ENCODE measurements at regions of chr2 and their contacts with region 1.

Region 1: GRCh38 chr2:169109502-169110409 is 40.4 kb downstream of the DHRS9 start:
- DNase-seq: peak; percentile 21
- H3K4me3 ChIP-seq: no peak overlapping the region
- CTCF ChIP-seq: peak; percentile 77

Region 2: DNA sequence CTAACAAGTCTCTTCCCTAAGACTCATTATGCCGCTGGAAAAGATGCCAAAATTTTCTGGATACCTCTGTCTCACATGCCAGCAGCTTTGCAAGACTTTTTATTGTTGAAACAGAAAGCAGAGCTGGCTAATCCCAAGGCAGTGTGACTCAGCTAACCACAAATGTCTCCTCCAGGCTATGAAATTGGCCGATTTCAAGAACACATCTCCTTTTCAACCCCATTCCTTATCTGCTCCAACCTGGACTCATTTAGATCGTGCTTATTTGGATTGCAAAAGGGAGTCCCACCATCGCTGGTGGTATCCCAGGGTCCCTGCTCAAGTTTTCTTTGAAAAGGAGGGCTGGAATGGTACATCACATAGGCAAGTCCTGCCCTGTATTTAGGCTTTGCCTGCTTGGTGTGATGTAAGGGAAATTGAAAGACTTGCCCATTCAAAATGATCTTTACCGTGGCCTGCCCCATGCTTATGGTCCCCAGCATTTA is 14.1 kb before region 1 on chr2:
- CTCF ChIA-PET with region 1: interaction called, 26 read pairs
- POLR2A ChIA-PET with region 1: no interaction called
- DNase-seq: peak; percentile 46
- H3K4me3 ChIP-seq: no peak overlapping the region
- CTCF ChIP-seq: no peak

Measured in AG04449 (cell line).